Posterior vena cava (tissue), 2 donors: ENCODE measurements at regions of chrX and their contacts with region 1.

Region 1: DNA sequence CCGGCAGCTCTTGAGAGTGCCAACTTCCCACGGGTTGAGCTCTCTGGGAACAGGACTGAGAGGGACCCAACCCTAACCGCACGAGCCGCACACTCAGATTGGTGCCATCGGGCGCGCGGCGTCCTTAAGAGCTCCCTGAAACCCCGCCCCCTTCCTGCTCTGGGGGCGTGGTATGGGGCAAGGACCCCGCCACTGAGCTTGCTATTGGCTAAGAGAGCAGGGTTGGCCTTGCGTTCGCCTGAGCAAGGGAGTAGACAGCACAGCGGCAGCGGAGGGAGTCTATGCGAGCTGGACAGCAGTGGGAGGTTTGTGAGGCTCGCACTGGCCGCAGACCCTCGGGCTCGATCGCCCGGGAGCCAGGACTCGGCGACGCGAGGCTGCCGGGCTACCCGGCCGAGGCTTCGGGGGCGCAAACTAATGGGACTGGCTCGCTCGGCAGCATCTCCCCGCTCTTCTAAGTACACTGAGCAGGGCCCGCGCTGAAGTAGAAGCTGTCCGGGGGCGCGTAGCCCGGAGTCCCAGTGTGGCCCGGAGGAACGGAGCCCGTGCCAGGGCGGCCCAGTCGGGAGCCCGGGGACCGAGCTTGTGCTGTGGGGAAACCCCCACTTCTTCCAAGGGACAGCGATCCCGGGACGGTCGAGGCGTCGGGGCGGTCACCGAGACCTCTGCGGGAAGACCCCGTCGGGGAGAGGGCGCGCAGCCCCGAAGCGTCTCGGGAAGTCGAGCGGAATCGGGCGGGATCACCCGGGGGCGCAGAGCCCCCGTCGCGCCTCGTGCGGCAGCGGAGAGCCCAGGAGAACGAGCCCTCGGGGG is at the start of gene EFNB1:
- DNase-seq: peak; percentile 97
- total RNA-seq, gene EFNB1: 18.9 to 26.4 TPM

Region 2: DNA sequence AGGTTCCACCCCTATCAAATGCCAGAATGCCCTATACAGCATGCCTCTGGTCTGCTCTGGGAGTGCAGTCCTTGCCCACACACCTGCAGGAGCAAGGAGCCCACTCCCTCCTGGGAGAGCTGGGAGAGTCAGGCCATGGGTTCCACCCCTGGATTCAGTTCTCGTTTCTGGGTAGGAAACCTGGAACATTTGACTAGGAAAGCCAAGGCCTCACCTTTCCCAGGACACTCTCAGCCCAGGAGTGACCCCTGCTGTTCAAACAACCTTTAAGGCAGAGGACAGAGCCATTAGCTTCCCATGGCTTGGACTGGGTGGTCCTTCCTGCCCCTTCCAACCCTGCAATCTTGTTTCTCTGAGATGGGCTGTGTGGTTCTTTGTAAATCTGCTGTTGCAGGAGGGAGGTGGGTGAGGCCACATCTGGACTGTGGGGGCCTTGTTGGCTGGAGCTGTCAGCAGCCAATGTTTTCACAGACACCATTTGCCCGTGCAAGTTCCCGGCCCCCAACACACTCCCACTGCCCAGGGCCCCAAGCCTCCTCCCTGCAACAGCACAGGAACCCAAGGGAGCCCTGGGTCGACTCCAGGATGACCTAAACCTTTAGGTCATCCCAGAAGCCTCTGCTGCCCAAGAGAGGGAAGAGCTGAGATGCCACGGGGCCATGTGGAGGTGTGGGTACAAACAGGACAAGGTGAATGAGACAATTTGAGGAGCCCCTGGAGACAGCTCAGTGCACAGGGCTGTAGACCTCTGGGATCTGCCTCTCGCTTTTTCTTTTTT is 231.9 kb after region 1 on chrX:
- intact Hi-C with region 1: loop called in 1 of 2 experiments (anchors 2 kb)
- DNase-seq: peak; percentile 45

Region 3: GRCh38 chrX:69216911-69217310 is 388.0 kb after region 1 on chrX:
- intact Hi-C with region 1: loop called (anchors 5 to 10 kb)
- DNase-seq: peak; percentile 62

Region 4: GRCh38 chrX:69222103-69223090 is 393.5 kb after region 1 on chrX:
- intact Hi-C with region 1: loop called (anchors 5 to 10 kb)
- DNase-seq: peak; percentile 88

Region 5: DNA sequence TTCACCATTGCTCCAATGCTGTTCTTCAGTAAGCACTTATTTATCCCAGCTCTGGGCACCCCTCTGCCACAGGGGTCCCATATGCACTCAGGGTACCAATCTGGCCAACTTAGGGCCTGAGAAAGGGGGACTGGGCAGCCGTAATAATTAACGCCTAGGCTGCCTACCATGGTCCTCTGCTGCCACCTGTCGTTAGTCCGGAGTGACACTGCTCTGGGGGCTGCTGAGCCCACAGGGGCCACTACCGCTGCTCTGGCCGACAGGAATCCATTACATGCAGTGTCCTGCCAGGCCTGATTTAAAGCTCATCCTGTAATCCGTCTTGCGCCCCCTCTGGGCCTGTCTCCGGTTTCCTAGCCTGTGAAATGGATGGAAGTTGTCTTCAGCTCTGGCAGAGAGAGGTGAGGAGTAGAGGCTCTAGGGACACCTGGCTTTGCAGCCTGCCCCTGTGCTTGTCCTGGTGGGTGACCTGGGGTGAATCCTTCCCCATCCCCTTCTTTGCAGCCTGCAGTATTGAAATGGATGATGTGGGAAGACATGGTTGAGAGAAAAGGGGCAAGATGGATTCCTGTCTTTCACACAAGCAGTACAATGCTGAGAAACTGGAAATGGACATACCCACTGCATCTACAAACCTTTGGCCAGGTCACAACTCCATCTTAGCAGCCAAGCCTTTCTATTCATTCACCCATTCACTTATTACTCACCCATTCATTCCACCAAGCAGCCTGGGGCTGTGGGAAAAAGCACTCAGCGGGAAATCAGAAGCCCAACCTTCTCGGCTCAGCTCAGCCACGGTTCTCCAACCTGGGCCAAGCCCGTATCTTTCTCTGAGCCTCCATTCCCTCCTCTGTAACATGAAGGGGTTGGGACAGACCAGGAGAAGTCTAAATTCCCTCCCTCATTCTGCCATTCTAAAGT is 558.9 kb after region 1 on chrX:
- intact Hi-C with region 1: loop called (anchors 10 kb)
- DNase-seq: no peak